IMR-90 (cell line): ENCODE measurements at regions of chr6 and their contacts with region 1.

Region 1: GRCh38 chr6:139973669-139974344 is 599.4 kb upstream of the CITED2 start:
- DNase-seq: peak; percentile 92
- ATAC-seq: peak; percentile 82
- H3K4me3 ChIP-seq: no peak overlapping the region
- H3K27ac ChIP-seq: peak overlapping the region; percentile 63; the same call in 1 of the 2 replicates
- H3K4me1 ChIP-seq: peaks cover 12% of the 10 kb centered on the region
- H3K27me3 ChIP-seq: no peaks in the 10 kb centered on the region
- CTCF ChIP-seq: no peak
- POLR2A ChIP-seq: no peak
- RAD21 ChIP-seq: no peak; the same call in 1 of the 2 replicates

Region 2: GRCh38 chr6:139881728-139882211 is 92.0 kb before region 1 on chr6:
- CTCF ChIA-PET with region 1: no interaction called
- POLR2A ChIA-PET with region 1: no interaction called
- dilution Hi-C with region 1: no loop called
- in situ Hi-C with region 1: no loop called
- intact Hi-C with region 1: loop called (anchors 10 kb)
- DNase-seq: peak; percentile 53
- ATAC-seq: peak; percentile 76
- H3K4me3 ChIP-seq: peak overlapping the region; percentile 31; the same call in 1 of the 2 replicates
- H3K27ac ChIP-seq: peak overlapping the region; percentile 60
- H3K4me1 ChIP-seq: peaks cover 13% of the 10 kb centered on the region
- H3K27me3 ChIP-seq: no peaks in the 10 kb centered on the region
- CTCF ChIP-seq: peak; percentile 43
- POLR2A ChIP-seq: no peak
- RAD21 ChIP-seq: peak; percentile 54